ENCODE measurements at regions of chr1 and their contacts with region 1.

Region 1: DNA sequence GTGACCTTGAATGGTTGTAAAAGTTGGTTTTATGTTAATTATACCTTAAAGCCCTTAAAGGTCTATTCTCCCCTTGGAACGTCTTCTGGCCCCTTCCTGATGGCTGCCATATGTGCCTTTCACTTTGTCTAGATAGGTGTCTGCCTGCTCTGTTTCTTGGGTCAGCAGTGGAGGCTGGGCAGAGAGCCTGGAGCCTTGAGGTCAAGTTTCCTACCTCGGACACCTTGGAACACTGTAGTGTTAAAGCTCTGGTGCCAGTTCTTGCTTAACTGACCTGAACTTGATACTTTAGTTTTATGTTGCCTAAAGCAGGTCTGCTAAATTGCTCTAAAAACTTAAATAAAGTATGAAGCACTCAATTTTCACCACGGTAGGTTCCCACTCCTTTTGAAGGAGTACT is 86.5 kb downstream of the CDC14A start:
- DNase-seq: no peak
- H3K4me3 Mint-ChIP-seq: no peak overlapping the region
- H3K27ac Mint-ChIP-seq: no peak overlapping the region
- H3K4me1 Mint-ChIP-seq: peaks cover 59% of the 10 kb centered on the region
- H3K27me3 Mint-ChIP-seq: no peaks in the 10 kb centered on the region

Region 2: GRCh38 chr1:100423832-100424337 is 14.9 kb before region 1 on chr1:
- intact Hi-C with region 1: loop called (anchors 2 kb)
- DNase-seq: no peak
- H3K4me3 Mint-ChIP-seq: no peak overlapping the region
- H3K27ac Mint-ChIP-seq: peak overlapping the region; percentile 53
- H3K4me1 Mint-ChIP-seq: peaks cover 28% of the 10 kb centered on the region
- H3K27me3 Mint-ChIP-seq: no peaks in the 10 kb centered on the region